CD4-positive, alpha-beta T cell (primary cell): ENCODE measurements at regions of chr5 and their contacts with region 1.

Region 1: GRCh38 chr5:97101189-97101910 is 41.1 kb downstream of the LIX1 start:
- DNase-seq: no peak
- ATAC-seq: no peak
- H3K4me3 ChIP-seq: no peak overlapping the region
- H3K4me3 Mint-ChIP-seq: no peak overlapping the region
- H3K27ac ChIP-seq: no peak overlapping the region
- H3K27ac Mint-ChIP-seq: no peak overlapping the region
- H3K4me1 ChIP-seq: no peaks in the 10 kb centered on the region
- H3K4me1 Mint-ChIP-seq: no peaks in the 10 kb centered on the region
- H3K27me3 ChIP-seq: peaks cover 0 to 1% of the 10 kb centered on the region in 2 experiments
- H3K27me3 Mint-ChIP-seq: peaks cover 4% of the 10 kb centered on the region
- CTCF ChIP-seq: no peak

Region 2: GRCh38 chr5:97046270-97046982 is 54.9 kb before region 1 on chr5:
- CTCF ChIA-PET with region 1: no interaction called
- POLR2A ChIA-PET with region 1: no interaction called
- intact Hi-C with region 1: loop called in 1 of 2 experiments (anchors 5 kb)
- DNase-seq: peak in 2 of 14 experiments; percentile 7
- ATAC-seq: no peak
- H3K4me3 ChIP-seq: no peak overlapping the region
- H3K4me3 Mint-ChIP-seq: no peak overlapping the region
- H3K27ac ChIP-seq: no peak overlapping the region
- H3K27ac Mint-ChIP-seq: no peak overlapping the region
- H3K4me1 ChIP-seq: no peaks in the 10 kb centered on the region
- H3K4me1 Mint-ChIP-seq: no peaks in the 10 kb centered on the region
- H3K27me3 ChIP-seq: no peaks in the 10 kb centered on the region
- H3K27me3 Mint-ChIP-seq: no peaks in the 10 kb centered on the region
- CTCF ChIP-seq: no peak

Region 3: GRCh38 chr5:97194366-97194765 is 93.0 kb after region 1 on chr5:
- CTCF ChIA-PET with region 1: no interaction called
- POLR2A ChIA-PET with region 1: no interaction called
- intact Hi-C with region 1: no loop called
- DNase-seq: peak in 1 of 14 experiments; percentile 9
- ATAC-seq: no peak
- H3K4me3 ChIP-seq: no peak overlapping the region
- H3K4me3 Mint-ChIP-seq: no peak overlapping the region
- H3K27ac ChIP-seq: no peak overlapping the region
- H3K27ac Mint-ChIP-seq: no peak overlapping the region
- H3K4me1 ChIP-seq: peaks cover 5% of the 10 kb centered on the region
- H3K4me1 Mint-ChIP-seq: peaks cover 9% of the 10 kb centered on the region
- H3K27me3 ChIP-seq: no peaks in the 10 kb centered on the region
- H3K27me3 Mint-ChIP-seq: peaks cover 5% of the 10 kb centered on the region
- CTCF ChIP-seq: no peak

Region 4: DNA sequence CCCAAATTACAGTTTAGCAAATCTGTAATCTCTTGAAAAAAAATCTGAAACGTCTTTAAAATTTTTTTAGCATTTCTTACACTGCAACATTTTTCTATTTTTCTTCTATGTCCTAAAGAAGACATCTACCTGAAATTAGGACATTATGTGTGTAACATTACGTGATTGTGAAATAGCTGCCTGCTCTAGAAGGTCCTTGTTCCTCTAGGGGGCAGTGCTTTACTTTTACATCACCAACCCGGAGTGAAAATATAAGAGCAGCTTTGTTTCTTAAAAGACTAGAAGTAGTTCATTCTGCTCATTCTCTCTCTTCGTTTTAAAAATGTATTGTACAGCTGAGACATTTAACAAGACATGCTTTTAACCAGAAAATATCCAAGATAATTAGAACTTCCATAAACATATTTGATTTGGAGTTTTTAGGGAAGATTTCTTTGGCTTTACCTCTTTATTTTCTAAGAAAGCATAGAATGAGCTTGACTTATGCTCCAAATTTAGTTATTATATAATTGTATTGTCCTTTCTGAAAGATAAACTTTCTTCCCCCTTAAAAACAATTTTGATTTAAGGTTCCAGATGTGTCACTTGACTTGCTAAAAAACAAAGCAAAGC is 129.8 kb after region 1 on chr5:
- CTCF ChIA-PET with region 1: no interaction called
- POLR2A ChIA-PET with region 1: no interaction called
- intact Hi-C with region 1: no loop called
- DNase-seq: peak in 7 of 14 experiments; percentile 5 to 66 (median 17)
- ATAC-seq: peak; percentile 43
- H3K4me3 ChIP-seq: no peak overlapping the region
- H3K4me3 Mint-ChIP-seq: no peak overlapping the region
- H3K27ac ChIP-seq: no peak overlapping the region
- H3K27ac Mint-ChIP-seq: no peak overlapping the region
- H3K4me1 ChIP-seq: no peaks in the 10 kb centered on the region
- H3K4me1 Mint-ChIP-seq: no peaks in the 10 kb centered on the region
- H3K27me3 ChIP-seq: peaks cover 0 to 6% of the 10 kb centered on the region in 2 experiments
- H3K27me3 Mint-ChIP-seq: peaks cover 10% of the 10 kb centered on the region
- CTCF ChIP-seq: peak; percentile 73